ENCODE measurements at regions of chr19 and their contacts with region 1.

Region 1: DNA sequence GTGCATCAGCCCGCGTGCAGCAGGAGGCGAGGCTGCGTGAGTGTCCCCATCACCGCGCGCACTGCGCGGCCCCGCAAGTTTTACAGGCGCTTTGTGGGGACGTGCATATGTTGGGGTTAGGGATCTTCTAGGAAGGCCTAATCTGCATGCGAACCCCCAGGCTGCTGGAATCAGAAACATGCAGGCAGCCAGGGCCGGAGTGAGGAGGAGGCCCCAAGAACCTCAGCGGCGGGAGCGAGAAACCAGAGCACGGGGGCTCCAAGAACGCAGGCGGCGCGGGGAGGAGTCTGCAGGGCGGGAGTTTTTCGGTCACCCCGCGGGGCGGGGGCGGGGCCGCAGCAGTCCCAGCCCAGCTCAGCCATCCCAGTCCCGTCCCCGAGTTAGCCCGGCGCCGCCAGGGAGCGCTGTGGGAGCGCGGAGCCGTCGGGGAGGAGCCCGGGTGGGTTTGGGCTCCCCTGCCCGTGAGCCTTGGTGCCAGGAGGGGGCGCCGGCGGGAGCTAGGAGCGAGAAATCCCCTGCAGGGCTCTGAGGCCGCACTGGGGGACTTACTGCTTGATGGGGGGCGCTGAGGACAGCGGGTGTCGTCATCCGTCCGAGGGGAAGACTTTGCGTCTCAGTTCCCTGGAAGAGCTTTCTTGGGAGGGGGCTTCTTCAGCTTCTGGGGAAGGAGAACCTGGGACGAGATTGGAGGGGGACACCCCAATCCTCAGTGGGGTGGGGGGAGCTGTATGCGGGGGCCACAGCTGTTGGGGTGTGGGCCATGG is 933 bp upstream of the NRTN start:
- DNase-seq: peak; percentile 99
- ATAC-seq: peak; percentile 85
- H3K4me3 Mint-ChIP-seq: peak overlapping the region; percentile 75
- H3K27ac Mint-ChIP-seq: no peak overlapping the region
- H3K4me1 Mint-ChIP-seq: peaks cover 13% of the 10 kb centered on the region
- H3K27me3 Mint-ChIP-seq: peaks cover 47% of the 10 kb centered on the region
- CTCF ChIP-seq: peak; percentile 86; the same call in 1 of the 2 replicates

Region 2: GRCh38 chr19:5690125-5690954 is 113.6 kb before region 1 on chr19 and contains the start of gene RPL36:
- CTCF ChIA-PET with region 1: interaction called, 18 read pairs
- POLR2A ChIA-PET with region 1: interaction called, 3 read pairs
- DNase-seq: peak; percentile 99
- ATAC-seq: peak; percentile 19
- H3K4me3 Mint-ChIP-seq: peak within 1 kb of the TSS; percentile 99
- H3K27ac Mint-ChIP-seq: peak within 1 kb of the TSS; percentile 95
- H3K4me1 Mint-ChIP-seq: peaks cover 15% of the 10 kb centered on the region
- H3K27me3 Mint-ChIP-seq: peaks cover 5% of the 10 kb centered on the region; the same call in 1 of the 2 replicates
- CTCF ChIP-seq: peak; percentile 84
- total RNA-seq, gene RPL36: 1,080 to 1,240 TPM (median 1,178 TPM) in 3 replicates

Region 3: GRCh38 chr19:5827891-5828660 is 24.1 kb after region 1 on chr19:
- CTCF ChIA-PET with region 1: interaction called, 115 read pairs
- POLR2A ChIA-PET with region 1: interaction called, 22 read pairs
- DNase-seq: peak; percentile 93
- ATAC-seq: peak; percentile 75
- H3K4me3 Mint-ChIP-seq: peak overlapping the region; percentile 91
- H3K27ac Mint-ChIP-seq: peak overlapping the region; percentile 97
- H3K4me1 Mint-ChIP-seq: peaks cover 6% of the 10 kb centered on the region
- H3K27me3 Mint-ChIP-seq: no peaks in the 10 kb centered on the region; the same call in none of the 2 replicates
- CTCF ChIP-seq: no peak

Region 4: GRCh38 chr19:5891938-5892771 is 88.2 kb after region 1 on chr19:
- CTCF ChIA-PET with region 1: interaction called, 66 read pairs
- POLR2A ChIA-PET with region 1: interaction called, 7 read pairs
- DNase-seq: peak; percentile 53
- ATAC-seq: peak; percentile 48
- H3K4me3 Mint-ChIP-seq: no peak overlapping the region
- H3K27ac Mint-ChIP-seq: no peak overlapping the region
- H3K4me1 Mint-ChIP-seq: 0 out of 2 replicates have a peak, but pooled peaks cover 3% of the 10 kb centered on the region
- H3K27me3 Mint-ChIP-seq: peaks cover 25% of the 10 kb centered on the region
- CTCF ChIP-seq: peak; percentile 41

Region 5: DNA sequence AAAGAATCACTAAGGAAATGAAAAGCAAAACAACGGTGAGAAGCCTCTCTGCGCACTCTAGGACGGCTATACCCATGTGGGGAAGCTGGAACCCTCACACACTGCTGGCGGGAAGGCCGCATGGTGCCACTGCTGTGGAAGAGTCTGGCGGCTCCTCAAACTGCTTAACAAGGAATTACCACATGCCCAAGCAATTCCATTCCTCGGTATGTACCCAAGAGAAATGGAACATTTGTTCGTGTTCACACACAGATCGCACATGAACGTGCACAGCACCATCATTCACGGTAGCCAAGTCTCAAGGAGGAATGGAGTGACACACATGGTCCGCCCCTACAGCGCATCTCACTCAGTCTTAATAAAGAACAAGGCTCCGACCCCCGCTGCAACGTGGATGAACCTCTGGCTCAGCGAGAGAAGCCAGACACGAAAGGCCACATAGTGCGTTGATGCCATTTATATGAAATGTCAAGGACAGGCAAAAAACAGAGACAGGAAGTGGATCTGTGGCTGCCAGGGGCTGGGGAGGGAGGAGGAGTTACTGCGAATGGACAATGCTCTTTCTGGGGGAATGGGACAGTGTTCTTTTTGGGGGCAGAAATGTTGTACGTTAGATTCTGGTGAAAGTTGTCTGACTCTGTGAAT is 117.7 kb after region 1 on chr19:
- CTCF ChIA-PET with region 1: no interaction called
- POLR2A ChIA-PET with region 1: no interaction called
- DNase-seq: no peak
- ATAC-seq: no peak
- H3K4me3 Mint-ChIP-seq: no peak overlapping the region
- H3K27ac Mint-ChIP-seq: no peak overlapping the region
- H3K4me1 Mint-ChIP-seq: no peaks in the 10 kb centered on the region
- H3K27me3 Mint-ChIP-seq: no peaks in the 10 kb centered on the region
- CTCF ChIP-seq: no peak

Region 6: GRCh38 chr19:5953680-5954213 is 149.8 kb after region 1 on chr19:
- CTCF ChIA-PET with region 1: interaction called, 34 read pairs
- POLR2A ChIA-PET with region 1: no interaction called
- DNase-seq: no peak
- ATAC-seq: no peak
- H3K4me3 Mint-ChIP-seq: peak overlapping the region; percentile 22; the same call in 1 of the 2 replicates
- H3K27ac Mint-ChIP-seq: peak overlapping the region; percentile 88
- H3K4me1 Mint-ChIP-seq: peaks cover 95% of the 10 kb centered on the region
- H3K27me3 Mint-ChIP-seq: no peaks in the 10 kb centered on the region; the same call in 1 of the 2 replicates
- CTCF ChIP-seq: no peak

Region 7: GRCh38 chr19:5977785-5978605 is 174.1 kb after region 1 on chr19 and contains the start of gene RANBP3:
- CTCF ChIA-PET with region 1: interaction called, 17 read pairs
- POLR2A ChIA-PET with region 1: no interaction called
- DNase-seq: peak; percentile 98
- ATAC-seq: peak; percentile 96
- H3K4me3 Mint-ChIP-seq: peak within 1 kb of the TSS; percentile 96
- H3K27ac Mint-ChIP-seq: peak within 1 kb of the TSS; percentile 93
- H3K4me1 Mint-ChIP-seq: peaks cover 30% of the 10 kb centered on the region
- H3K27me3 Mint-ChIP-seq: peaks cover 5% of the 10 kb centered on the region; the same call in 1 of the 2 replicates
- CTCF ChIP-seq: no peak
- total RNA-seq, gene RANBP3: 74.5 to 76.3 TPM (median 75.6 TPM) in 3 replicates

Region 8: GRCh38 chr19:6048808-6049405 is 245.0 kb after region 1 on chr19:
- CTCF ChIA-PET with region 1: interaction called, 15 read pairs
- POLR2A ChIA-PET with region 1: no interaction called
- DNase-seq: peak; percentile 78
- ATAC-seq: peak; percentile 93
- H3K4me3 Mint-ChIP-seq: no peak overlapping the region
- H3K27ac Mint-ChIP-seq: no peak overlapping the region
- H3K4me1 Mint-ChIP-seq: peaks cover 12% of the 10 kb centered on the region; the same call in 1 of the 2 replicates
- H3K27me3 Mint-ChIP-seq: peaks cover 6% of the 10 kb centered on the region; the same call in 1 of the 2 replicates
- CTCF ChIP-seq: peak; percentile 75

Region 9: DNA sequence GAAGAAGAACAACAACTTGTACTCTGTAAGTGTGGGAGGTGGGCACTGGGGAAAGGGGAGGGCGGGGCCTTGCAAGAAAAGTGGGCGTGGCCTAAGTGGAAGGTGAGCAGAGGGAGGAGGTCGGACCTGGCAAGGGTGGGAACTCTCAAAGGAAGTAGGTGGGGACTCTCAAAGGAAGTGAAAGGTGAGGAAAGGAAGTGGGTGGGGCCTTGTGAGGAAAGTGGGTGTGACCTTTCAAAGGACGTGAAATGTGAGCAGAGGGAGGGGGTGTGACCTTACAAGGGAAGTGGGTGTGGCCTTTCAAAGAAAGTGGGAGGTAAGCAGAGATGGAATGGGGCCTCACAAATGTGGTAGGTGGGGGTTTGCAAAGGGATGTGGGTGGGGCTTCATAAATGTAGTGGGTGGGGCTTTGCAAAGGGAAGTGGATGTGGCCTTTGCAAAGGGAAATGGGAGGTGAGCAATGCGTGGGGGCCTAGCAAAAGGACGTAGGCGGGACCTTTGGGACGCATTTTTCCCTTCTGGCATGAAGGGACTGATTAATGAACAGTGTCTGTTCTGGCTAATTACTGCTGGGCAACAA is 357.4 kb after region 1 on chr19:
- CTCF ChIA-PET with region 1: no interaction called
- POLR2A ChIA-PET with region 1: no interaction called
- DNase-seq: peak; percentile 22
- ATAC-seq: peak; percentile 64
- H3K4me3 Mint-ChIP-seq: no peak overlapping the region
- H3K27ac Mint-ChIP-seq: no peak overlapping the region
- H3K4me1 Mint-ChIP-seq: no peaks in the 10 kb centered on the region
- H3K27me3 Mint-ChIP-seq: peaks cover 13% of the 10 kb centered on the region
- CTCF ChIP-seq: no peak